ENCODE measurements at regions of chr6 and their contacts with region 1.

Region 1: GRCh38 chr6:25278914-25279747 is at the start of gene CARMIL1:
- DNase-seq: peak; percentile 77
- H3K4me3 Mint-ChIP-seq: peak within 1 kb of the TSS; percentile 81
- H3K27ac Mint-ChIP-seq: peak within 1 kb of the TSS; percentile 44
- H3K4me1 Mint-ChIP-seq: peaks cover 28% of the 10 kb centered on the region
- H3K27me3 Mint-ChIP-seq: no peaks in the 10 kb centered on the region
- total RNA-seq, gene CARMIL1: 2.4 to 2.7 TPM

Region 2: GRCh38 chr6:25404693-25405169 is 125.6 kb after region 1 on chr6:
- CTCF ChIA-PET with region 1: interaction called, 6 read pairs
- POLR2A ChIA-PET with region 1: no interaction called
- intact Hi-C with region 1: loop called (anchors 2 kb)
- DNase-seq: peak; percentile 71
- H3K4me3 Mint-ChIP-seq: no peak overlapping the region
- H3K27ac Mint-ChIP-seq: no peak overlapping the region
- H3K4me1 Mint-ChIP-seq: peaks cover 10% of the 10 kb centered on the region
- H3K27me3 Mint-ChIP-seq: no peaks in the 10 kb centered on the region

Region 3: GRCh38 chr6:26071135-26071534 is 792.0 kb after region 1 on chr6:
- CTCF ChIA-PET with region 1: no interaction called
- POLR2A ChIA-PET with region 1: no interaction called
- intact Hi-C with region 1: no loop called
- DNase-seq: no peak
- H3K4me3 Mint-ChIP-seq: no peak overlapping the region
- H3K27ac Mint-ChIP-seq: no peak overlapping the region
- H3K4me1 Mint-ChIP-seq: no peaks in the 10 kb centered on the region
- H3K27me3 Mint-ChIP-seq: no peaks in the 10 kb centered on the region

Measured in activated CD4-positive, alpha-beta memory T cell treated with anti-CD3 and anti-CD28 coated beads for 36 hours (primary cell).